H1 (cell line): ENCODE measurements at regions of chr11 and their contacts with region 1.

Region 1: GRCh38 chr11:42265073-42265472 is 805.6 kb upstream of the LRRC4C start:
- DNase-seq: no peak
- H3K4me3 ChIP-seq: no peak overlapping the region
- H3K27ac ChIP-seq: no peak overlapping the region
- H3K4me1 ChIP-seq: no peaks in the 10 kb centered on the region
- H3K27me3 ChIP-seq: no peaks in the 10 kb centered on the region
- CTCF ChIP-seq: no peak
- EP300 ChIP-seq: no peak
- POLR2A ChIP-seq: no peak
- RAD21 ChIP-seq: no peak

Region 2: DNA sequence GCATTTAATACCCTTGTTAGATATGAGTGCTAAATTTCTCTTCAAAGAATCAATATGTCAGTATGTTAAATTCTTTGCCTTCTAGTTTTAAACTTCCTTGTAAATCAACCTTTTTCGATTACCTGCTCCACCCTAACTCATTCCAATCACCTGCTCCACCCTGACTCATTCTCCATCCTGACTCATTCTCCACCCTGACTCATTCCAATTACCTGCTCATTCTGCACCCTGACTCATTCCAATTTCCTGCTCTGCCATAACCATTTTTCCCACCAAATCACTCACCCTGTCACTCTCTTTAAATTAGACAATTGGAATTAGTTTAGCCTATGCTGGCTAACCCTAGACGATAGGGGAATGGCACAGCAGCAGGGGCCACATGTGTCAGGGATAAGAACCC is 286.1 kb before region 1 on chr11:
- CTCF ChIA-PET with region 1: no interaction called
- POLR2A ChIA-PET with region 1: no interaction called
- DNase-seq: no peak
- H3K4me3 ChIP-seq: no peak overlapping the region
- H3K27ac ChIP-seq: no peak overlapping the region
- H3K4me1 ChIP-seq: no peaks in the 10 kb centered on the region
- H3K27me3 ChIP-seq: no peaks in the 10 kb centered on the region
- CTCF ChIP-seq: no peak
- EP300 ChIP-seq: no peak
- POLR2A ChIP-seq: no peak
- RAD21 ChIP-seq: no peak

Region 3: GRCh38 chr11:42036201-42036600 is 228.9 kb before region 1 on chr11:
- CTCF ChIA-PET with region 1: no interaction called
- POLR2A ChIA-PET with region 1: no interaction called
- DNase-seq: no peak
- H3K4me3 ChIP-seq: no peak overlapping the region
- H3K27ac ChIP-seq: no peak overlapping the region
- H3K4me1 ChIP-seq: no peaks in the 10 kb centered on the region
- H3K27me3 ChIP-seq: no peaks in the 10 kb centered on the region
- CTCF ChIP-seq: no peak
- EP300 ChIP-seq: no peak
- POLR2A ChIP-seq: no peak
- RAD21 ChIP-seq: no peak

Region 4: DNA sequence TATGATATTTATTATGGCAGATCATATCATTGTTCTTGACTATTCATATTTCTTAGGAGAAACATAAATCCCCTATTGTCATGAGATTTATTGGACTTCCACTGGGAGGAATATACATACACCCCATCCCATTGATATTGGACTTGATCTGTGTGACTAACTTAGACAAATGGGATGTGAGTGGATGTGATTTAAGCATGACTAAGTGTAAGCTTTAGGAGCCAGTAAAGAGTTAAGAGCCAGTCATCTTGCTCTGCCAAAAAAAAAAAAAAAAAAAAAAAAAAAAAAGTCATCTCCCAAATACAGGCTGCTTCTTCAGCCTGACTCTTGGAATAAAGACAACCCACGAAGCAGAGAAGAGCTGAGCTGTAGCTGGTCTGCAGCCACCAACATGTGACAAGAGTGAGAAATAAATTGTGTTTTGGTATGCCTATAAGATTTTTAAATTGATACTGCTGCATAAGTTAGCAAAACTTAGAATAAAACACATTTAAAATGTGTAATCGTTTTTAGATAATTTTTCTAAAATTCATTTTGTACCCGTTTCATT is 210.6 kb before region 1 on chr11:
- CTCF ChIA-PET with region 1: no interaction called
- POLR2A ChIA-PET with region 1: no interaction called
- DNase-seq: no peak
- H3K4me3 ChIP-seq: no peak overlapping the region
- H3K27ac ChIP-seq: no peak overlapping the region
- H3K4me1 ChIP-seq: no peaks in the 10 kb centered on the region
- H3K27me3 ChIP-seq: no peaks in the 10 kb centered on the region
- CTCF ChIP-seq: no peak
- EP300 ChIP-seq: no peak
- POLR2A ChIP-seq: no peak
- RAD21 ChIP-seq: no peak

Region 5: GRCh38 chr11:42253156-42253555 is 11.9 kb before region 1 on chr11:
- CTCF ChIA-PET with region 1: interaction called, 11 read pairs
- POLR2A ChIA-PET with region 1: no interaction called
- DNase-seq: no peak
- H3K4me3 ChIP-seq: no peak overlapping the region
- H3K27ac ChIP-seq: no peak overlapping the region
- H3K4me1 ChIP-seq: no peaks in the 10 kb centered on the region
- H3K27me3 ChIP-seq: no peaks in the 10 kb centered on the region
- CTCF ChIP-seq: no peak
- EP300 ChIP-seq: no peak
- POLR2A ChIP-seq: no peak
- RAD21 ChIP-seq: no peak

Region 6: GRCh38 chr11:42329929-42330565 is 65.0 kb after region 1 on chr11:
- CTCF ChIA-PET with region 1: no interaction called
- POLR2A ChIA-PET with region 1: no interaction called
- DNase-seq: no peak
- H3K4me3 ChIP-seq: no peak overlapping the region
- H3K27ac ChIP-seq: no peak overlapping the region
- H3K4me1 ChIP-seq: no peaks in the 10 kb centered on the region
- H3K27me3 ChIP-seq: no peaks in the 10 kb centered on the region
- CTCF ChIP-seq: no peak
- EP300 ChIP-seq: no peak
- POLR2A ChIP-seq: no peak
- RAD21 ChIP-seq: no peak